Tibial artery (tissue), 4 donors: ENCODE measurements at regions of chr5 and their contacts with region 1.

Region 1: DNA sequence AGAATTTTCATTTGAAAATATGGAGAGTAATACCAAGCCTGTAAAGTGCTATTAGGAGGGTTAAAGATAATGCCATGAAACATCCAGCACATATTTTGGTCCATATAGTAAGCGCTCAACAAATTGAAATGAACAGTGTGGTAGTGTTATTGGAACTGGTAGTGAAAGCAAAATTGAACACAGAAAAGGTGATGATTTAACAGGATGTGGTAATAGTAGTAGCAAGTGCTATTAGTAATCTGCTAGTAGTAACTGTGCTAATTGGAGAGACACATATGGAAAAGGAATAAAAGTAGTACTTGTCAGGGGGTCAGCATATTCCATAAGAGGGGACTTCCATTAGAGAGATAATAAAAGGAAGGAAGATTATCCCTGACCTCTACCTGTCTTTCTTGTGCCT is 187.3 kb downstream of the HTR1A start:
- DNase-seq: no peak
- H3K4me3 ChIP-seq: no peak overlapping the region
- H3K27ac ChIP-seq: no peak overlapping the region
- H3K4me1 ChIP-seq: no peaks in the 10 kb centered on the region
- H3K27me3 ChIP-seq: no peaks in the 10 kb centered on the region
- CTCF ChIP-seq: no peak

Region 2: GRCh38 chr5:63697811-63698210 is 77.1 kb before region 1 on chr5:
- intact Hi-C with region 1: loop called (anchors 2 kb)
- DNase-seq: no peak
- H3K4me3 ChIP-seq: no peak overlapping the region
- H3K27ac ChIP-seq: no peak overlapping the region
- H3K4me1 ChIP-seq: no peaks in the 10 kb centered on the region
- H3K27me3 ChIP-seq: no peaks in the 10 kb centered on the region
- CTCF ChIP-seq: no peak

Region 3: DNA sequence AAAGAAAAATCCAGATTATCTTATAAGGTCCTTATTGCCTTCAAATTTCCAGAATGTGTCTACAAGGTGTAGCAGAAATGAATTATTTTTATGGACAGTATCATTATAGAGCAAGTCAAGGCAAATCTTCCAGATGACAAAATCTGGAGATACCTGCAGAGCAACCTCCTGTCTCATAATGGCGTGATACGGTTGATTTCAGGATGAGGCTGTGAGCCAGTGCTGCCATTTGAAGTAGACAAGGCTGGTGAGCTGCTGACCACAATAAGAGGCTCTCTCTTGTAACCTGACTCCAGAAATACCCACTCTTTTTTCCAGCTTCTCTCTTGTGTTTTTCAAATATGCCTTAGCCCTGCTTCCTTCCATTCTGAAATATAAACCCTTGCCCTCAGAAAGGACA is 79.1 kb after region 1 on chr5:
- intact Hi-C with region 1: loop called (anchors 2 kb)
- DNase-seq: no peak
- H3K4me3 ChIP-seq: no peak overlapping the region
- H3K27ac ChIP-seq: no peak overlapping the region
- H3K4me1 ChIP-seq: no peaks in the 10 kb centered on the region
- H3K27me3 ChIP-seq: no peaks in the 10 kb centered on the region
- CTCF ChIP-seq: no peak

Region 4: DNA sequence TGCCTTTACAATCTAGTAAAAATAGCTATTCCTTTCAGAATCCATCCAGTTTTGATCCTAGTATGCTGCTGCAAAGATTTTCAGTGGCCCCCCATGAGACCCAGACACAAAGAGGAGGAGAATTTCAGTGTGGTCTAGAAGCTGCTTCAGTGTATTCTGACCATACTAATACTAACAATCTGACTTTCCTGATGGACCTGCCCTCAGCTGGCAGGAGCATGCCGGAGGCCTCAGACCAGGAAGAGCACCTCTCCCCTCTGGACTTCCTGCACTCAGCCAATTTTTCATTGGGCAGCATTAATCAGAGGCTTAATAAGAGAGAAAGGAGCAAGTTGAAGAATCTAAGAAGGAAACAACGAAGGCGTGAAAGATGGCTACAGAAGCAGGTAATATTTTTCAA is 439.2 kb after region 1 on chr5:
- intact Hi-C with region 1: no loop called
- DNase-seq: no peak
- H3K4me3 ChIP-seq: no peak overlapping the region
- H3K27ac ChIP-seq: peak overlapping the region in 1 of 2 donors; percentile 24
- H3K4me1 ChIP-seq: peaks cover 0 to 31% (median 9%) of the 10 kb centered on the region in 4 donors
- H3K27me3 ChIP-seq: no peaks in the 10 kb centered on the region
- CTCF ChIP-seq: no peak